Left lung (tissue), 14 donors: ENCODE measurements at regions of chr11 and their contacts with region 1.

Region 1: GRCh38 chr11:116093481-116094270 is 589.5 kb upstream of the CADM1 start:
- DNase-seq: no peak
- ATAC-seq: no peak
- H3K4me3 ChIP-seq: no peak overlapping the region
- H3K27ac ChIP-seq: no peak overlapping the region
- H3K4me1 ChIP-seq: no peaks in the 10 kb centered on the region
- H3K27me3 ChIP-seq: no peaks in the 10 kb centered on the region
- CTCF ChIP-seq: no peak

Region 2: DNA sequence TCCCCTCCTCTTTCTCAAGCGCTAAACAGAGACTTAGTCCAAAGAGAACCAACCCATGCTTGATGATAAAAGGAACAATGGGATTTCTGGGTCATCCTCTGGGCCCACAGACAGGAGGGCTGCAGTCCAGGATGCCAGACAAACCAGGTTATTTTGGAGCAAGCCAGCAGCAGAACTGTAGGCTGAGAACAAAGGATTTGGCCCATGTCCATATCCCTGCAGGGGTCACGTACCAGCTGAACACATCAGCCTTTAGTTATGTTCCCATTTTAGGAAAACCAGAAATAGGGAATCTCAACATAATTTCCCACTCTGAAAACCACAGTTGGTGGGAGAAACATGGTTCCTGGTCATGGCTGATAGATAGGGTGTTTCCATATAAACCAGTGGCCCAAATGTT is 55.8 kb before region 1 on chr11:
- intact Hi-C with region 1: no loop called
- DNase-seq: no peak
- ATAC-seq: no peak
- H3K4me3 ChIP-seq: no peak overlapping the region
- H3K27ac ChIP-seq: no peak overlapping the region
- H3K4me1 ChIP-seq: no peaks in the 10 kb centered on the region
- H3K27me3 ChIP-seq: no peaks in the 10 kb centered on the region
- CTCF ChIP-seq: no peak

Region 3: DNA sequence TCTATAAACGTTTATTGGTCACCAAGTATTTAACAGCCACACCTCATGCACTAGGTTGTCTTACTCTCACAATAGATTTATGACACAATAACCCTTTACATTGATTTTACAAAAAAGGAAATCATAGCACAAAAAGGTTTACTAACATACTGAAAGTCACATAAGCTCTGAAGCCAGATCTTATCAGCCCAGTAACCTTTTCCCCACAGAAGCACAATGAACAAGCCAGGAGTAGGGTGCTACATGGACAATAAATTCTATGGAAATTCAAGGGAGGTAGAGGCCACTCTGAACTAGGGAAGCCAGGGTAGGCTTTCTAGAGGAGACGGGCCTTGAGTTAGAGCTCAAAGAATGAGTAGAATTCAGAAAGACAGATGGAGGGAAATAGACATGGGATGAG is 44.1 kb after region 1 on chr11:
- intact Hi-C with region 1: loop called in 1 of 2 experiments (anchors 2 kb)
- DNase-seq: no peak
- ATAC-seq: no peak
- H3K4me3 ChIP-seq: no peak overlapping the region
- H3K27ac ChIP-seq: no peak overlapping the region
- H3K4me1 ChIP-seq: no peaks in the 10 kb centered on the region
- H3K27me3 ChIP-seq: no peaks in the 10 kb centered on the region
- CTCF ChIP-seq: no peak